ENCODE measurements at regions of chr7 and their contacts with region 1.

Region 1: GRCh38 chr7:76020031-76020714 is 25.8 kb upstream of the TMEM120A start:
- DNase-seq: peak; percentile 83
- ATAC-seq: peak; percentile 79
- H3K4me3 Mint-ChIP-seq: no peak overlapping the region
- H3K27ac Mint-ChIP-seq: no peak overlapping the region
- H3K4me1 Mint-ChIP-seq: peaks cover 3% of the 10 kb centered on the region
- H3K27me3 Mint-ChIP-seq: no peaks in the 10 kb centered on the region
- CTCF ChIP-seq: peak; percentile 92

Region 2: DNA sequence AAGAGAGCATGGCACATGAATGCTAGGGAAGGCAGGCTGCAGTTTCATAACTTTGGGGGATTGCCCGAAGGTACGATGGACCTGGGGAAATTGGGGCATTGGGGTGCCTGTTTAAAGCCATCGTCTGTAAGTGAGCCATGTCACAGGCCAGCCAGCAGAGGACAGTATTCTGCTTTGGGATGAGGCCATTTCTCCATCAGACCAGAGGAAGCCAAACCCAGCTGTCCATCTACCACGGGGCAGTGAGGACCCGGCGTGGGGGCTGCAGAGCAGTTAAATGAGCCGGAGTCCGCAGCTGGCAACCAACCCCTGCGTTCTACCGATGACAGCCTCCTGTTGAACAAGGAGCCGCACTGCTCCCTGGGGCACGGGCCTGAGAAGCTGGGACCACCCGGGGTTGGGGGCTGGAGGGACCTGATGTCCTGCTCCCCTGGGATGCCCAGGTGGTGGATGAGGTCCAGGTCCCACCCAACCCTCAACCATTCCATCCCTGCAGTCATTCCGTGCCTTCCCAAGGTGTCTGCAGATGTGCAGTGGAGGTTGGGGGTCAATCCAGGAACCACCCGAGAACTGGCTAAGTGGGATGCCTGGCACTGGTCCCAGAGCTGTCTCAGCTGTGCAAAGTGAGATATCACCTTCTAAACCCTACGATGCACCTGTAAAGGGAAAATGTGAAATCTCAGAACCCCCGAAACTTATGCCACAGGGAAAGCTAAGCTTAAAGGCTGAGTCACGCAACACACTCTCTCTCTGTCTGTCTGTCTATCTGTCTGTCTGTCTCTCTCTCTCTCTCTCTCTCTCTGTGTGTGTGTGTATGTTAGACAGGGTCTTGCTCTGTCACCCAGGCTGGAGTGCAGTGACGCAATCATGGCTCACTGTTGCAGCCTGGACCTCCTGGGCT is 153.4 kb before region 1 on chr7:
- CTCF ChIA-PET with region 1: interaction called, 55 read pairs
- POLR2A ChIA-PET with region 1: no interaction called
- DNase-seq: peak; percentile 73
- ATAC-seq: peak; percentile 99
- H3K4me3 Mint-ChIP-seq: no peak overlapping the region
- H3K27ac Mint-ChIP-seq: no peak overlapping the region; the same call in 1 of the 2 replicates
- H3K4me1 Mint-ChIP-seq: no peaks in the 10 kb centered on the region
- H3K27me3 Mint-ChIP-seq: no peaks in the 10 kb centered on the region
- CTCF ChIP-seq: peak; percentile 53

Region 3: GRCh38 chr7:75994388-75995051 is 25.7 kb before region 1 on chr7 and contains the start of gene TMEM120A:
- CTCF ChIA-PET with region 1: interaction called, 17 read pairs
- POLR2A ChIA-PET with region 1: no interaction called
- DNase-seq: peak; percentile 97
- ATAC-seq: peak; percentile 89
- H3K4me3 Mint-ChIP-seq: peak within 1 kb of the TSS; percentile 73
- H3K27ac Mint-ChIP-seq: no peak within 1 kb of the TSS; the same call in 1 of the 2 replicates
- H3K4me1 Mint-ChIP-seq: peaks cover 22% of the 10 kb centered on the region
- H3K27me3 Mint-ChIP-seq: no peaks in the 10 kb centered on the region
- CTCF ChIP-seq: no peak
- total RNA-seq, gene TMEM120A: 20.1 to 23.0 TPM (median 21.9 TPM) in 3 replicates

Region 4: DNA sequence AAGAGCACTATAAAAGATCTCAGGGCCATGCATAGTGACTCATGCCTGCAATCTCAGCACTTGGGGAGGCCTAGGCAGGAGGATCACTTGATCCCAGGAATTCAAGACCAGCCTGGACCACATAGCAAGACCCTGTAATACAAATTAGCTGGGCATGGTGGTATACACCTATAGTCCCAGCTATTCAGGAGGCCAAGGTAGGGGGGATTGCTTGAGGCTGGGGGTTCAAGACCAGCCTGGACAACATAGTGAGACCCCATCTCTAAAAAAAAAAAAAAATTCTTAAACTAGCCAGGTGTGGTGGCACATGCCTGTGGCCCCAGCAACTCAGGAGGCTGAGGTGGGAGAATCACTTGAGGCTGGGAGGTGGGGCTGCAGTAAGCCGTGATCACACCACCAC is 11.8 kb after region 1 on chr7:
- CTCF ChIA-PET with region 1: interaction called, 11 read pairs
- POLR2A ChIA-PET with region 1: no interaction called
- DNase-seq: no peak
- ATAC-seq: no peak
- H3K4me3 Mint-ChIP-seq: no peak overlapping the region
- H3K27ac Mint-ChIP-seq: no peak overlapping the region
- H3K4me1 Mint-ChIP-seq: peaks cover 3% of the 10 kb centered on the region
- H3K27me3 Mint-ChIP-seq: no peaks in the 10 kb centered on the region
- CTCF ChIP-seq: no peak

Region 5: GRCh38 chr7:76047811-76048667 is 27.9 kb after region 1 on chr7 and contains the starts of genes MDH2 and STYXL1:
- CTCF ChIA-PET with region 1: interaction called, 14 read pairs
- POLR2A ChIA-PET with region 1: interaction called, 3 read pairs
- DNase-seq: peak; percentile 94
- ATAC-seq: peak; percentile 96
- H3K4me3 Mint-ChIP-seq: peak within 1 kb of the TSS; percentile 99
- H3K27ac Mint-ChIP-seq: peak within 1 kb of the TSS; percentile 99
- H3K4me1 Mint-ChIP-seq: peaks cover 22% of the 10 kb centered on the region
- H3K27me3 Mint-ChIP-seq: no peaks in the 10 kb centered on the region
- CTCF ChIP-seq: no peak
- total RNA-seq, gene MDH2: 298 to 333 TPM (median 313 TPM) in 3 replicates
- total RNA-seq, gene STYXL1: 21.3 to 28.2 TPM (median 27.8 TPM) in 3 replicates

Region 6: DNA sequence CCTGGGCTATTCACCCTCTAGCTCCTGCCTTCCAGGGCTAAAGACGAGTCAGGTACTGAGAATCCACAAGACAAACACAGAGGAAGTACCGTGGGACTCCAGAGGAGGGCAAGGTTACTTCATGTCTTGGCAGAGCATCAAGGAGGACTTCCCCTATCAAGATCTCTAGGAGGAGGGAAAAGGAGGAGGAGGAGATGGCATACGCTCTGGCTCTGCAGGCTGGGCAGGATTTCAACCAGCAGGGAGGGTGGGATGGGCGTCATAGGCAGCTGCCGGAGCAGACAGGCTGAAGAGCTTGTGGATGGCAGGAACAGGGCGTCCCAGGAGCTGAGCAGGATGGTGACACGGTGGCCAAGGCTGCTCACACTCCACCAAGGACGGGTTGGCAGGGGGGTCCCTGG is 49.1 kb after region 1 on chr7:
- CTCF ChIA-PET with region 1: interaction called, 14 read pairs
- POLR2A ChIA-PET with region 1: no interaction called
- DNase-seq: peak; percentile 43
- ATAC-seq: peak; percentile 64
- H3K4me3 Mint-ChIP-seq: no peak overlapping the region
- H3K27ac Mint-ChIP-seq: peak overlapping the region; percentile 57; the same call in 1 of the 2 replicates
- H3K4me1 Mint-ChIP-seq: peaks cover 3% of the 10 kb centered on the region; the same call in 1 of the 2 replicates
- H3K27me3 Mint-ChIP-seq: no peaks in the 10 kb centered on the region
- CTCF ChIP-seq: no peak

Region 7: DNA sequence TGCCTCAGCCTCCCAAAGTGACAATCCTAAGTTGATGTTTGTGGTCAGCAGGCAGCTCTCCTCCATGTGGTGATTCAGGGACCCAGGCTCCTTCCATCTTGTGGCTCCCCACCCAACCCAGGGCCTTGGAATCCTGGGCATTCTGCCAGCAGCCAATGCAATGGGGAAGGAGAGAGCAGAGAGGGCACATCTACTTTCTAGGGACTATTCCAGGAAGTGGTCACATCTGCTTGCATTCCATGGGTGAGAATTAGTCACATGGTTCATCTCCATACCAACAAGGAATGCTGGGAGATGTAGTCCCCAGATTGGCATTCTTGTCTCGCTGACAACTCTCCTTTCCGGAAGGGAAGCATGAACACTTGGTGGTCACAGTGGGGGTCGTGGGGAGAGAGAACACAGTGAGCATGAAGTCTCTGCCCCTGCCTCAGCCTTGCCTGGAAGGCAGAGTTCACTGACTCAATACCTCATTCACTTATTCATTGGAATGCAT is 171.7 kb after region 1 on chr7:
- CTCF ChIA-PET with region 1: no interaction called
- POLR2A ChIA-PET with region 1: no interaction called
- DNase-seq: peak; percentile 34
- ATAC-seq: peak; percentile 94
- H3K4me3 Mint-ChIP-seq: no peak overlapping the region
- H3K27ac Mint-ChIP-seq: peak overlapping the region; percentile 81; the same call in 1 of the 2 replicates
- H3K4me1 Mint-ChIP-seq: peaks cover 21% of the 10 kb centered on the region
- H3K27me3 Mint-ChIP-seq: no peaks in the 10 kb centered on the region; the same call in 1 of the 2 replicates
- CTCF ChIP-seq: no peak